Activated CD4-positive, alpha-beta T cell treated with anti-CD3 and anti-CD28 coated beads, Interleukin-2, amount 10 ng/mL, durations not matched to agents 24 days and 14 days (primary cell): ENCODE measurements at regions of chr3 and their contacts with region 1.

Region 1: GRCh38 chr3:10248184-10249080 is at the start of gene TATDN2:
- DNase-seq: peak; percentile 98
- H3K4me3 Mint-ChIP-seq: peak within 1 kb of the TSS; percentile 92
- H3K27ac Mint-ChIP-seq: peak within 1 kb of the TSS; percentile 98
- H3K4me1 Mint-ChIP-seq: peaks cover 46% of the 10 kb centered on the region
- H3K27me3 Mint-ChIP-seq: no peaks in the 10 kb centered on the region
- total RNA-seq, gene TATDN2: 70.9 and 74.4 TPM in 2 replicates

Region 2: DNA sequence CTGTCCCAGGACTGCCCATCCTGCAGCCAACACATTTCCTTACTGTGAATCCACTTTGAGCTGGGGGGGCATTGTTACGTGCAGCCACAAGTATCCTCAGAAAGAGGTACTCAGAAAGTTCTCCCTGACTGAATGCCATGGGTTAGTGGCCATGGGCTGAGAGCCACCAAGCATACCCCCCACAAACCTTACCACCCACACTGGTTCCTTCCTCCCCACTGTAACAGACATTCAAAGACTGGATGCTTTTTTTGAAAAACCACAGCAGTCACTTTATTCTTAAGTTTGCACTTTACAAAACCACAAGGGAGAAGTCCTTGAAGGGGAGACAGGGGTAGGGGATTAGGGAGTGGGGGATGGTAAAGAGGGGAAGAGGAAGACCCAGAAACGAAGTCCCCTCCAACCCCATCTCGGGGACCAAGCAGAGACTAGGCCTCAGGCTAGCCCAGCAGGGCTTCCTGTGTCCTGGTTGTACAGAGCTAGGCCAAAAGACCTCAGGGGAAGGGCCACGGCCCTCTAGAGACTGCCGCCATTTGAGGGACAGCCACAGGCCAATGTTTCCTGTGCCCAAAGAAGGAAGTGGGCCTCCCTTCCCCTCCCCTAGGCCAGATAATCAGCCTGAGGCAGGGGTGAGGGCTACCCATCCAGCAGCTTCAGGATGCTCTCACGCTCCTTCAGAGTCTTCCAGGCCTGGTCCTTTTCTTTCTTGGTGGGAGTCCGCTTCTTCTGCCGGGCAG is 468.5 kb before region 1 on chr3:
- intact Hi-C with region 1: loop called (anchors 5 kb)
- DNase-seq: peak; percentile 81
- H3K4me3 Mint-ChIP-seq: peak overlapping the region; percentile 59
- H3K27ac Mint-ChIP-seq: peak overlapping the region; percentile 88
- H3K4me1 Mint-ChIP-seq: peaks cover 60% of the 10 kb centered on the region
- H3K27me3 Mint-ChIP-seq: no peaks in the 10 kb centered on the region

Region 3: GRCh38 chr3:9890249-9891071 is 358.0 kb before region 1 on chr3 and contains the start of gene JAGN1:
- intact Hi-C with region 1: loop called (anchors 2 kb)
- DNase-seq: peak; percentile 96
- H3K4me3 Mint-ChIP-seq: peak within 1 kb of the TSS; percentile 98
- H3K27ac Mint-ChIP-seq: peak within 1 kb of the TSS; percentile 99
- H3K4me1 Mint-ChIP-seq: peaks cover 33% of the 10 kb centered on the region
- H3K27me3 Mint-ChIP-seq: no peaks in the 10 kb centered on the region
- total RNA-seq, gene JAGN1: 39.5 and 41.0 TPM in 2 replicates

Region 4: DNA sequence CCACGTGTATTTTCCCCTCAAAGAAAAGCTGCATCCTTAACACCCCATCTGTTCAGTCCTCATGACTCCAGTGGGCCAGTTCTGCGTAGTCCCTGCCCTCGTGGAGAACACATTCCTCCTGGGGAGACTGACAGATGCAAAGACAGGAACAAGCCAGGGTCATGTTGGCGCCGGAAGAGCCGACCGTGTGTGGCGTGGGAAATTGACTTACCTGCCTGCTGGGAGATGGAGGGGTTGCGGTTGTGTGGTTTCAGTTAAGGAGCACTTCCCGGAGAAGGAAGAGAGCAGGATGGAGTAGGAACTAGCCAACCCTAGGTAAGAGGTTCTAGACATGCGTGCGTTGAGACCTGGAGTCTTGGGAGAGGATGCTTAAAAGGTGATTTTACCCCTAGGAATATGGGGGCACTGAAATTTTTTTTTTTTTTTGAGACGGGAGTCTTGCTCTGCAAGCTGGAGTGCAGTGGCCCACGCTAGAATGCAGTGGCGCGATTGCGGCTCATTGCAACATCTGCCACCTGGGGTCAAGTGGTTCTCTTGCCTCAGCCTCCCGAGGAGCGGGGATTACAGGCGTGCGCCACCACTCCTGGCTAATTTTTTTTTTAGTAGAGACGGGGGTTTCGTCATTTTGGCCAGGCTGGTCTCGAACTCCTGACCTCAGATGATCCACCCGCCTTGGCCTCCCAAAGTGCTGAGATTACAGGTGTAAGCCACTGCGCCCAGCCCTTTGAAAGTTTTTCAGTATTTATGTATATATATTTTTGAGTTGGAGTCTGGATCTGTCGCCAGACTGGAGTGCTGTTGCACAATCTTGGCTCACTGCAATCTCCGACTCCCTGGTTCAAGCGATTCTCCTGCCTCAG is 105.5 kb before region 1 on chr3:
- intact Hi-C with region 1: loop called (anchors 1 kb)
- DNase-seq: peak; percentile 72
- H3K4me3 Mint-ChIP-seq: peak overlapping the region; percentile 96
- H3K27ac Mint-ChIP-seq: peak overlapping the region; percentile 88
- H3K4me1 Mint-ChIP-seq: peaks cover 26% of the 10 kb centered on the region
- H3K27me3 Mint-ChIP-seq: no peaks in the 10 kb centered on the region

Region 5: GRCh38 chr3:10173926-10174435 is 74.5 kb before region 1 on chr3:
- intact Hi-C with region 1: no loop called
- DNase-seq: peak; percentile 56
- H3K4me3 Mint-ChIP-seq: peak overlapping the region; percentile 52
- H3K27ac Mint-ChIP-seq: peak overlapping the region; percentile 87
- H3K4me1 Mint-ChIP-seq: peaks cover 19% of the 10 kb centered on the region
- H3K27me3 Mint-ChIP-seq: no peaks in the 10 kb centered on the region

Region 6: DNA sequence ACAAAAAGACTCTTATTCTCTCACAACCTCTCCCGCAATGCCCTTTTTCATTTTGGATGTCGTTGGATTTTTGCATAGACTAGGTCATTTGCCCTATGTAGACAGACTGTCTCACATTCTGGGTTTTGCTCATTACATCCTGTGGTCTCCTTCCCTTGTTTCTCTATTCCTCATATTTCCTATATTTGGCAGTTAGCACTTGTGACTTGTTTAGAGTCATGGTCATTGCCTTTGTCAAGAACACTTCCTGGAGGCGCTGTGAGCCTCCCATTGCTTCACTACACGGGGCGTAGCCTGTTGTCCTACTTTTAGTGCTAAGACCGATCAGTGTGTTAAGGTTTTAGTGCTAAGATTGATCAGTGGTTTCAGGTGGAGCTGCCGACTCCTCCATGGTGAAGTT is 16.3 kb before region 1 on chr3:
- intact Hi-C with region 1: no loop called
- DNase-seq: no peak
- H3K4me3 Mint-ChIP-seq: no peak overlapping the region
- H3K27ac Mint-ChIP-seq: peak overlapping the region; percentile 46
- H3K4me1 Mint-ChIP-seq: peaks cover 31% of the 10 kb centered on the region
- H3K27me3 Mint-ChIP-seq: no peaks in the 10 kb centered on the region

Region 7: DNA sequence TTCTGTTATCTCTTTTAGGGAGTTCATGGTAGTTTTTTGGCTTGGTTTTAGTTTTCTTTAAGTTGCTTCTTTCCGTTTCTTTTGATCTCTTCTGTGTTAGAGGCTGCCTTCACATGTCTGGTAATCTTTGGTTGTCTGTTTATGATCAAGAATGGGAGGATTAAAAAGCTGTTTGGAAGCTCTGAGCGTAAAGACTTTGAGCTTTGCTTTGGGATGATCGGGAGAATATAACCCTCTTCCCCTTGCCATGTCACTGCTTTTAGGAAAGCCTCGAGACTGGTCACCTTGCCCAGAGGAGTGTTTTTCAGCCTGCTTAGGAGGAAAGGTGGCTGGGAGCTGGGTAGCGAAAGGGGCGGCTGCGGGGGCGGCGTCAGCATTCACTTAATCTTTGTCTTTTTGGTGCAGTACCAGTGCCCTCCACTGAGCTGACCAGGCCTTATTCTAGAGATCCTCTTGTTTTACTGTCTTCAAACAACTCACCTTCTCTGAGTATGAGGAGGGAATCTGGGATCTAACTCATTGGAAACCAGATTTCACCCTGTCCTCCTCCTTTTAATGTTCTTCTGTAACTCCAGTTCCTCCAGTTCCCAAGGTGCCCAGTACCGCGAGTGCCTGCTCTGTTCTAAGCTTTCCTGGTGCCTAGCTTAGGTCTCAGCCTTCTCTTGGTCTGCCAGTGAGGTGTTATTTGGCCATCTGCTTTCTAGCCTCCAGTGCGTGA is 15.4 kb after region 1 on chr3:
- intact Hi-C with region 1: loop called (anchors 1 kb)
- DNase-seq: peak; percentile 88
- H3K4me3 Mint-ChIP-seq: peak overlapping the region; percentile 76
- H3K27ac Mint-ChIP-seq: peak overlapping the region; percentile 91
- H3K4me1 Mint-ChIP-seq: peaks cover 60% of the 10 kb centered on the region
- H3K27me3 Mint-ChIP-seq: no peaks in the 10 kb centered on the region